ENCODE measurements at regions of chr5 and their contacts with region 1.

Region 1: DNA sequence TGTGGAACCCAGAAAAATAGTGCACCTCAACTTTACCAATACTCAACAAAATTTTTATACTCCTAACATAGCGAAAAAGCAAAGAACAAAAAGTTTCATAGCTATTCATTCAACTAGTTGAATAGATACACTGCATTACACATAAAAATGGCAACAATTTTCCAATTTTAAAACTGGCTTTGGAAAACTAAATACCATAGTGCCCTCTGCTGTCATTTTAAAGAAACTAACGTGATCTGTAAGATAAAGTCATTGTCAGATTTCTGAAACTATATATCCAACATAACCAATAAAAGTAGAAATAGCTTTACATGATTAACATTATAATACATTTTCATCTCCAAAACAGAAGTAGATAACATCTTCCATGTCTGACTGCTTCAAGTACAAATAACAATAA is 31.6 kb downstream of the DTWD2 start:
- DNase-seq: peak; percentile 12
- H3K4me3 ChIP-seq: no peak overlapping the region
- H3K27ac ChIP-seq: no peak overlapping the region
- H3K4me1 ChIP-seq: no peaks in the 10 kb centered on the region
- H3K27me3 ChIP-seq: no peaks in the 10 kb centered on the region
- CTCF ChIP-seq: peak; percentile 24 to 46

Region 2: DNA sequence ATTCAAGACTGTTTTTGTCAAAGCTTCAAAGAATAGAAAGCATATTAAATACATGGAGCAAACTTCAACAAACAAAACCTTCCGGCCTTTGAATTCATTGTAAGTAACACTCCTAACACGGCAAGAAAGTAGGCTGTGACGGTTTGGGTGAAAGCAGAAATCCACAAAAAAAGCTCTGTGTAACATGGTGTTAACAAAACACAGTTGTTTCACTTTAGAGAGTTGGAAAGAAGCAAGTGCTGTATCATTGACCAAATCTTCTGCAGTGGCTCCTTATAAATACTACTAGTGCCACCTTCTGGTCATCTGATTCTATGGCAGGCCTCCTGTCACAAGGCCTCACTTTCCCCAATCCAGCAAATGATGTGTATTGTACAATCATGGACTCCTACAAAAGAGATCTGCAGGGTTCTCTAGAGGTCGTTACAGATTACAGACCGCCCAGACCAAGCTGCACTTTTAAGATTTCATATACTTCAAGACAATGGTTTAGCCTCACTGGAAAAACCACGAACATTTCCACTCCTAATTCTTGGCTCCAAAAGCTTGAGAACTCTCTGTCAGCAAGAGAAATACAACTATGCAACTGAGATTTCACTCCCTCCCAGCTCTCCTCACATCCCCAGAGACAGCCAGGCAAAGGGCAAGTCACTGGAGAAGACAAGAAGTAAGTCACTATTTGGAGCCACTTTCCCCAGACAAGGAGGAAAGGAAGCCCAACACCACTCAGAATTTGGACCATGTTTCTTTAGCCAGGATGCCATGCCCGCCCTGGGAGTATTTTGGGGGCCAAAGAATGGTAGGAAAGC is 164.6 kb before region 1 on chr5:
- CTCF ChIA-PET with region 1: no interaction called
- dilution Hi-C with region 1: no loop called
- in situ Hi-C with region 1: no loop called
- intact Hi-C with region 1: loop called (anchors 5 kb)
- DNase-seq: peak; percentile 41
- H3K4me3 ChIP-seq: no peak overlapping the region
- H3K27ac ChIP-seq: no peak overlapping the region
- H3K4me1 ChIP-seq: peaks cover 4% of the 10 kb centered on the region
- H3K27me3 ChIP-seq: no peaks in the 10 kb centered on the region
- CTCF ChIP-seq: peak; percentile 79 to 80

Measured in mammary epithelial cell (primary cell).